ENCODE measurements at regions of chr6 and their contacts with region 1.

Region 1: DNA sequence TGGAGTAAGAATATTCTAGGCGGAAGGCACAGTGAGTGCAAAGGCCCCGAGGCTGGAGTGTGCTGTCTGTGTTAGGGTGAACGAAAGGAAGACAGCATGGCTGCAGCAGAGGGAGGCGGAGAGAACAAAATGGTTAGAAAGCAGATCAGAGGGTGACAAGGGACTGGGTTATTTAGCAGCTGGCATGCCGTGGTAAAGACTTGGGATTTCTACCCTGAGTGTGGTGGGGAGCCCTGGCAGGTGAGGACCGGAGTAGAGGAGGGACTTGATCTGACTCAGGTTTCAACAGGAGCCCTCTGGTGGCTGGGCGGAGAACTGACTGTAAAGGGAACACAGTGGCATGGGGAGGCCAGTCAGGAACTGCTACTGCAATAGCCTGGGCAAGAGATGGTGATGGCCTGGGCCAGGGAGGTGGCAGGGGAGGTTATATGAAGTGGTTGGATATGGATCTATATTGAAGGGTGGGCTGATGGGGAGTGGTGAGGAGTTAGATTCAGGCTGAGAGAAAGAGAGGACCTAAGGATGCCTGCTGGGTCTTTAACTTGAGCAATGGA is 38.0 kb downstream of the PIM1 start:
- DNase-seq: peak; percentile 82

Region 2: DNA sequence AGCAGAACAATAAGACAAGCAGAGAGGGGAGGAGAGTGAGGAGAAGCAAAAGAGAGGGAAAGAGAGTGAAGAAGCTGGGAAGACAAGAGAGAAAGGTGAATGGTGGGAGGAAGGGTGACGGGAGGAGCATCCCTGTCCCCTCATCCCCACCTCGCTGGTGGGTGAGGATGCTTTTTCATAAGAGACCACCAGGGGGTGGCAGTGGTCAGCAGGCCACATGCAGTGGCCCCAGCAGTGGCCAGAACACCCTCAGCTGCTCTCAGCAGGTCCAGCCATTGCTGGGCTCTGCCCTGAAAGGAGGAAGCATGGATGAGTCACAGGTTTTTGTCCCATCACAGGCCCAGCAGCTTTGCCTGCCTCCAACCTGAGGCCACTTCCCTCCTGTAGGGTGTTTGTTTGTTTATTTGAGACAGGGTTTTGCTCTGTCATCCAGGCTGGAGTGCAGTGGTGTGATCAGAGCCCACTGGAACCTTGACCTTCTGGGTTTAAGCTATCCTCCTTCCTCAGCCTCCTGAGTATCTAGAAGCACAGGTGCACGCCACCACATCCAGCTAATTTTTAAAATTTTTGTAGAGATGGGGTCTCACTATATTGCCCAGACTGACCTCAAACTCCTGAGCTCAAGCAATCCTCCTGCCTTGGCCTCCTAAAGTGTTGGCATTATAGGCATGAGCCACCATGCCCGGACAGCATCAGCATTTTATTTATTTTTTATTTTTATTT is 178.6 kb before region 1 on chr6:
- CTCF ChIA-PET with region 1: interaction called, 22 read pairs
- POLR2A ChIA-PET with region 1: no interaction called
- DNase-seq: peak; percentile 76

Region 3: GRCh38 chr6:37607944-37608343 is 400.0 kb after region 1 on chr6:
- CTCF ChIA-PET with region 1: no interaction called
- POLR2A ChIA-PET with region 1: no interaction called
- DNase-seq: peak; percentile 38

Measured in HEK293T (cell line).